ENCODE measurements at regions of chr3 and their contacts with region 1.

Region 1: DNA sequence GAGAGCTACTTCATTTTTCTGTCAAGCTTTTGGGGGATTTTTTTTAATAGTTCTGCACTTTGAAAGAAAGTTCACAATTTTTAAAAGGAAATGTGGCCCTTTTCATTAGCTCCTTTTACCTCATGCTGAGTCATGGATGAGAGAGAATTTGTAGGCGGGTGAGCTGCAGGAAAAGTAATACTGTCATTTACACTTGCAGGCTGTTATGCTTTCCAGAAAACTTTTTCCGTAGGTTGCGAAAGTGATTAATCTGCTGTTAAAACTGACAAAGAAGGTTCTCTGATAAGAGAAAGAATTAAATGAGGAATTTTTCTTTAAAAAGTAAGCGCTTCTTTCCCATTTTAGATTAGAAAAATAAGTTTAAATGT is 430.2 kb downstream of the LPP start:
- DNase-seq: no peak
- ATAC-seq: peak; percentile 69
- H3K4me3 ChIP-seq: no peak overlapping the region
- H3K27ac ChIP-seq: peak overlapping the region in 1 of 2 donors; percentile 80
- H3K4me1 ChIP-seq: peaks cover 4 to 6% of the 10 kb centered on the region in 2 donors
- H3K27me3 ChIP-seq: no peaks in the 10 kb centered on the region

Region 2: DNA sequence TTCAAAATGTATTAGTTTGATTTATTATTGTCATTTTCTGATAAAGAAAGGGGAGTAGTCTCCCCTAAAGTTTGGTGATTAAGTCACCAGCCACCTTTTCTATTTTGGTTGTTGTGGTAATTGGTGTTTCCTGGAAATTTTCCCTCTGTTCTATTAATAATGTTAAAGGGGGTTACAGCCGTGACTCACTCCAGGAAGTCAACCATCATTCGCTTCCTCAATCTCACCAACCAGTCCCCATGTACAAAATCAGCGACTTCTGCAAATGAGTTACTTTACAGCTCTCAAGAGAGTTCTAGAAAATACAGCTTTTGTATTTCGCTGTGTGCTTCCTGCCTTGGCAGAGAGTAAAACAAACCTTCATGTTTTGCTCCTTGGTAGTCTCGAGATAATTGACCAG is 145.1 kb before region 1 on chr3:
- intact Hi-C with region 1: loop called in 1 of 2 experiments (anchors 10 kb)
- DNase-seq: no peak
- ATAC-seq: peak; percentile 63
- H3K4me3 ChIP-seq: no peak overlapping the region
- H3K27ac ChIP-seq: peak overlapping the region in 1 of 2 donors; percentile 50
- H3K4me1 ChIP-seq: peaks cover 7 to 11% of the 10 kb centered on the region in 2 donors
- H3K27me3 ChIP-seq: no peaks in the 10 kb centered on the region

Measured in aorta (tissue), 5 donors.